HCT116 (cell line): ENCODE measurements at regions of chr15 and their contacts with region 1.

Region 1: GRCh38 chr15:34342737-34343575 is at the starts of genes NOP10 and NUTM1:
- DNase-seq: peak; percentile 90
- ATAC-seq: peak; percentile 82
- H3K4me3 ChIP-seq: peak within 1 kb of the TSS; percentile 79 to 96
- H3K27ac ChIP-seq: peak within 1 kb of the TSS; percentile 72
- H3K4me1 ChIP-seq: peaks cover 7 to 25% of the 10 kb centered on the region in 2 experiments; a peak in 3 of 4 replicates
- H3K27me3 ChIP-seq: no peaks in the 10 kb centered on the region
- CTCF ChIP-seq: peak; percentile 80 to 90 (median 80)
- POLR2A ChIP-seq: peak; percentile 96
- RAD21 ChIP-seq: peak; percentile 80
- total RNA-seq, gene NOP10: 216 TPM
- total RNA-seq, gene NUTM1: 0.07 TPM

Region 2: DNA sequence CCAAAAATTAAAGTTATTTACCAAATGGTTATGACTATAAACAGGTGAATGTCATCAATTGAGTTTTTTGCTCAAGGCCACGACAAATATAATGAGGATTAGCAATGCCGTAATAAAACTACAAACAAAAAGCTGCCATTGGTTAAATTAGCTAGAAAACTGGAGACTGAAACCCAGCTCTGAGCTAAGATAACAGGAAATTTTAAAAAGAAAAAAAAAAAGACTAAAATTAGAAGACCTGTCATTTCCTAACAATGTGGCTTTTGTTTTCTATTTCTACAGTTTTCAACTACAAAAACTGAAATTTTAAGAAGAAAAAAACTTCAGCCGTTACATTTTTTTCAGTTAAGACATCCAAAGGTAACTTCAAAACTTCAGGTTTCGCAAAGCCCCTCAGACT is 15.1 kb before region 1 on chr15:
- CTCF ChIA-PET with region 1: no interaction called
- POLR2A ChIA-PET with region 1: interaction called, 5 read pairs
- RAD21 ChIA-PET with region 1: no interaction called
- intact Hi-C with region 1: loop called (anchors 2 kb)
- DNase-seq: no peak
- ATAC-seq: no peak
- H3K4me3 ChIP-seq: no peak overlapping the region
- H3K27ac ChIP-seq: no peak overlapping the region
- H3K4me1 ChIP-seq: no peaks in the 10 kb centered on the region
- H3K27me3 ChIP-seq: no peaks in the 10 kb centered on the region
- CTCF ChIP-seq: no peak
- POLR2A ChIP-seq: no peak
- RAD21 ChIP-seq: no peak